PC-3 (cell line): ENCODE measurements at regions of chr5 and their contacts with region 1.

Region 1: DNA sequence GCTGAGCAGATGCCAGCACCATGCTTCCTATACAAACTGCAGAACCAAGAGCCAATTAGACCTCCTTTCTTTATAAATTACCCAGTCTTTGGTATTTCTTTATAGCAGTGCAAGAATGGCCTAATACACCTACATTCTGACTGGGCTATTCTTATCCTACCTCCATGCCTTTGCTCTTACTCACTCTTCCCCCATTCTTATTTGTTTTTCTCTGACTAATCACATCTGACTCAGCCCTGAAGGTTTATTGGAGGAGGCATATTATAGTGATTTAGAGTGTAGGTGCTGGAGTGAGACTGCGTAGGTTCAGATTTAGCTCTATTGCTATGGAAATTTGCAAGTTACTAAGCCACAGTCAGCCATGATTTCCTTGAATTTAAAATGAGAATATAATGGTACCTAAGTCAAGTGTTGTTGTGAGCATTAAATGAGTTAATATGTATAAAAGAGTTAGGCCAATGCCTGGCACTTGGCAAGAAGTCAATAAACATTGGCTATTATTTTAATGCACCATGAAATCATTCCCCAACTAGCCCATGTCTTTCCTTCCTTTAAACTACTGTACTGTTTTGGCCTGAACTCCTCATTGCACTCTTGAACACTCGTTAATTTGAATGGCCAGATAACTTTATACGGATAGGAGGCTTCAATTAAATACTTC is 531.2 kb upstream of the ZNF608 start:
- DNase-seq: peak; percentile 93
- ATAC-seq: peak; percentile 96
- H3K4me3 ChIP-seq: no peak overlapping the region; the same call in 1 of the 2 replicates
- H3K27ac ChIP-seq: peak overlapping the region; percentile 70
- H3K4me1 ChIP-seq: peaks cover 34% of the 10 kb centered on the region
- H3K27me3 ChIP-seq: no peaks in the 10 kb centered on the region
- CTCF ChIP-seq: no peak

Region 2: GRCh38 chr5:124790895-124791732 is 486.5 kb before region 1 on chr5:
- CTCF ChIA-PET with region 1: no interaction called
- POLR2A ChIA-PET with region 1: interaction called, 20 read pairs
- intact Hi-C with region 1: no loop called
- DNase-seq: peak; percentile 12
- ATAC-seq: no peak
- H3K4me3 ChIP-seq: no peak overlapping the region
- H3K27ac ChIP-seq: no peak overlapping the region
- H3K4me1 ChIP-seq: peaks cover 15% of the 10 kb centered on the region
- H3K27me3 ChIP-seq: no peaks in the 10 kb centered on the region
- CTCF ChIP-seq: no peak

Region 3: GRCh38 chr5:124948062-124948753 is 329.4 kb before region 1 on chr5:
- CTCF ChIA-PET with region 1: no interaction called
- POLR2A ChIA-PET with region 1: no interaction called
- intact Hi-C with region 1: loop called (anchors 5 kb)
- DNase-seq: peak; percentile 60
- ATAC-seq: peak; percentile 83
- H3K4me3 ChIP-seq: peak overlapping the region; percentile 22; the same call in 1 of the 2 replicates
- H3K27ac ChIP-seq: peak overlapping the region; percentile 90
- H3K4me1 ChIP-seq: peaks cover 30% of the 10 kb centered on the region
- H3K27me3 ChIP-seq: no peaks in the 10 kb centered on the region
- CTCF ChIP-seq: no peak

Region 4: DNA sequence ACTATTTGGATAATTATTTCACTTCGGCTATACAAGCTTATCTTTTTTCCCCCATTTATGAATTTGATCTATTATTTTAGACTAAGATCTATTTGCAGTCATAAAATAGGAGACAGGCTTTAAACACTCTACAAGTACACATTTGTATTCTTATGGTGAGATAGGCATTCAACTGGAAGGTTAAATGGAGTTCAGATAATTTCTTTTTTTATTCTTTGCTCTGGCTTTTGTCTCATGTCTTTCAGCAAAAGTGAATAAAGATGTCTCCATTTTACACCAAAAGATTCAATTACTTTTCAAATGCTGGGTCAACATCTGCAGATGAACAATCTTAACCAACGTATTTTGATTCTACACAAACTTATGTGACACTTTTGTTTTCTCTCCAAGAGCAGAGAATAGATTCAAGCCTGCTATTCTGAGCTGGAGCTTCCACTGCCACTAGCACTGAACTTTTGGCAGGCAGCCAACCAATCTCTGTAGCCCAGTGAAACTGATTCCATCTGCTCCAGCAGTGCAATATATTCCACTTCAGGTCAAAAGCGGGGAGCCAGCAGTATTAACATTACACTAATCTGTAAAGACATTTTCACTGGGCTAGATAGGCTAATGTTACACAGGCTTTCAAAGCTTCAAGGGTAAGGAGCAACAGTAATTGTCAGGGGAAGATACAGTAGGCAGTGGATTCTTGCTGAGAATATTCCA is 79.2 kb before region 1 on chr5:
- CTCF ChIA-PET with region 1: no interaction called
- POLR2A ChIA-PET with region 1: no interaction called
- intact Hi-C with region 1: loop called (anchors 10 kb)
- DNase-seq: no peak
- ATAC-seq: no peak
- H3K4me3 ChIP-seq: no peak overlapping the region
- H3K27ac ChIP-seq: no peak overlapping the region
- H3K4me1 ChIP-seq: no peaks in the 10 kb centered on the region
- H3K27me3 ChIP-seq: no peaks in the 10 kb centered on the region
- CTCF ChIP-seq: no peak

Region 5: DNA sequence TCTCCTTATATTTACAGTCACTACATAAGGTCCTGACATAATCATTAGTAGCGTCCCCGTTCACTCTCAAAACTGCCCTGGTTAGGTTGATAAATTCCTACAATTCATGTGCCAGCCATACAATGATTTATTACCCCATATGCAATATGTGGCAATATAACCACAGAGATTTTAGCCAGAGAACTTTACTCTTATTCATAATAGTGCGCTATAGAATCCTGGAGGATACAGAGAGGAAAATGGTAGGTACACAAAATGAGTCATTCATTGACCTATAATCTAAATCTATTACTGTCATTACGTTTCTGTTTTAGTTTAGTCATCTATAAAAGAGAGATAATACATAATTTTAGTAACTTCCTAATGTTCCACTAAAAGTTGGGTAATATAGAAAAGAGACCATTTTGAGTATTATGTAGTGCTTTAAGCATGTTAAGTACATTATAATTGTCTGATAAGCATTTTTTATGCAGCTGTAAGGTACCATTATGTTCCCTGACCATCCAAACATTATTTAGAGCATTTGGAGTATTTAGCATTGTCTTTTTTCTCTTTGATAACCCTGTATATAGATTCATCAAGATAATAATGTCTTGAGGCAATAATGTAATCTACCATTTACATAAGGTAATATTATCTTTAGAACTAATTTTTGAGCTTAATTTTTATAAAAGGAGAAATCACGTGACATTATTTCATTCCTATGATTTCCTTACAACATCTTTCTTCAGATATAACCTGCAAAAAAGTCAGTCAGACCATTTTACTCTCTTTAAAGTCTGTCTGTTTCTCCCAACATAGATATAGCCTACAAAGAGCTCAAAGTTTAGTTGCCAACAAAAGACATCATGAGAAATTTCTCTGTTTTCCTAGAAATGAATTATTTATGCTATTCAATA is 124.3 kb after region 1 on chr5:
- CTCF ChIA-PET with region 1: no interaction called
- POLR2A ChIA-PET with region 1: no interaction called
- intact Hi-C with region 1: loop called (anchors 1 kb)
- DNase-seq: peak; percentile 88
- ATAC-seq: peak; percentile 77
- H3K4me3 ChIP-seq: peak overlapping the region; percentile 58
- H3K27ac ChIP-seq: peak overlapping the region; percentile 81
- H3K4me1 ChIP-seq: peaks cover 38% of the 10 kb centered on the region
- H3K27me3 ChIP-seq: no peaks in the 10 kb centered on the region
- CTCF ChIP-seq: no peak